Sigmoid colon (tissue), 7 donors: ENCODE measurements at regions of chr6 and their contacts with region 1.

Region 1: GRCh38 chr6:4313044-4313686 is 177.8 kb upstream of the ECI2 start:
- DNase-seq: peak; percentile 74
- H3K4me3 ChIP-seq: no peak overlapping the region
- H3K27ac ChIP-seq: peak overlapping the region; percentile 24 to 59 (median 50)
- H3K4me1 ChIP-seq: peaks cover 0 to 7% (median 3%) of the 10 kb centered on the region in 4 donors
- H3K27me3 ChIP-seq: no peaks in the 10 kb centered on the region
- CTCF ChIP-seq: peak in 1 of 4 experiments; percentile 16
- EP300 ChIP-seq: no peak
- POLR2A ChIP-seq: no peak

Region 2: GRCh38 chr6:4936681-4937041 is 623.5 kb after region 1 on chr6:
- intact Hi-C with region 1: loop called (anchors 10 kb)
- DNase-seq: no peak
- H3K4me3 ChIP-seq: no peak overlapping the region
- H3K27ac ChIP-seq: no peak overlapping the region
- H3K4me1 ChIP-seq: peaks cover 0 to 15% (median 9%) of the 10 kb centered on the region in 4 donors
- H3K27me3 ChIP-seq: no peaks in the 10 kb centered on the region
- CTCF ChIP-seq: peak in 3 of 4 experiments; percentile 31 to 52 (median 48)
- EP300 ChIP-seq: no peak
- POLR2A ChIP-seq: no peak